ENCODE measurements at regions of chr13 and their contacts with region 1.

Region 1: GRCh38 chr13:51058461-51059167 is 52.5 kb downstream of the C13orf42 start:
- DNase-seq: no peak
- ATAC-seq: no peak
- H3K4me3 Mint-ChIP-seq: no peak overlapping the region
- H3K27ac Mint-ChIP-seq: no peak overlapping the region
- H3K4me1 Mint-ChIP-seq: no peaks in the 10 kb centered on the region
- H3K27me3 Mint-ChIP-seq: peaks cover 7% of the 10 kb centered on the region

Region 2: DNA sequence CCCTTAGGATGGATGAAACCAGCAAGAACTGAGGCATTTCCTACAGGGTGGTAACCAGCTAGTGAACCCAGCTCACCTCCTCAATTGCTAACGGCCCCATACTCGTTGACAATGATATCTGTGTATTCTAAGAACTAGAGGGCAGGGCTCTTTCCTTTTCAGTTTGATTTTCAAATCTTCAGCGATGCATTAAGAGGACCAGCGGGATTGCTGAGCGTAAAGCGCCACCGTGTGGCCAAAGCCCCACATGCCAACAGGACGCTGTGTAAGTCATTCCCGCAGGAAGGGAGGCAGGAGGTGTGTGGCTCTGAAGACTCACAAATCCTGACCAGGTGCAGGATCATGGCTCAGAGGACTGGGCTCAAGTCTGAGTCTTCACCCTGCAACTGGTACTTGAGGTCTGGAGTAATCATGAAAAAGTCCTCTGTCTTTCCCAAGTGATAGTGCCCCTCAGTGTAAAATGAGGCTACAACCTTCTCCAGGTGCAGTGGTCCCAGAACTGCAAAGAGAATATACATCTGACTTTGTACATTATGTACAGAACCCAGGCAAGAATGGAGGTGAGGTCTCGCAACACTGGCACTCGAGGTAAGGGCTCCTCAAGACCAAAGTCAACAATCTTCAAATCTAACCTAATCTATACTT is 11.5 kb after region 1 on chr13:
- CTCF ChIA-PET with region 1: interaction called, 10 read pairs
- DNase-seq: peak; percentile 87
- ATAC-seq: peak; percentile 91
- H3K4me3 Mint-ChIP-seq: no peak overlapping the region
- H3K27ac Mint-ChIP-seq: peak overlapping the region; percentile 74
- H3K4me1 Mint-ChIP-seq: peaks cover 49% of the 10 kb centered on the region
- H3K27me3 Mint-ChIP-seq: peaks cover 8% of the 10 kb centered on the region

Measured in activated CD8-positive, alpha-beta memory T cell treated with anti-CD3 and anti-CD28 coated beads, Interleukin-2, amount 10 ng/mL, durations not matched to agents 7 days and 5 days (primary cell).